Testis (tissue), 5 donors: ENCODE measurements at regions of chr10 and their contacts with region 1.

Region 1: GRCh38 chr10:105950410-105950809 is 1214.1 kb downstream of the SORCS1 start:
- DNase-seq: peak; percentile 72
- H3K4me3 ChIP-seq: no peak overlapping the region
- H3K27ac ChIP-seq: no peak overlapping the region
- H3K4me1 ChIP-seq: no peaks in the 10 kb centered on the region
- H3K27me3 ChIP-seq: no peaks in the 10 kb centered on the region
- CTCF ChIP-seq: peak; percentile 45 to 69 (median 60)
- POLR2A ChIP-seq: no peak

Region 2: GRCh38 chr10:106175760-106176377 is 225.5 kb after region 1 on chr10:
- intact Hi-C with region 1: loop called (anchors 5 kb)
- DNase-seq: no peak
- H3K4me3 ChIP-seq: no peak overlapping the region
- H3K27ac ChIP-seq: no peak overlapping the region
- H3K4me1 ChIP-seq: no peaks in the 10 kb centered on the region
- H3K27me3 ChIP-seq: no peaks in the 10 kb centered on the region
- CTCF ChIP-seq: peak in 1 of 3 experiments; percentile 11
- POLR2A ChIP-seq: no peak

Region 3: DNA sequence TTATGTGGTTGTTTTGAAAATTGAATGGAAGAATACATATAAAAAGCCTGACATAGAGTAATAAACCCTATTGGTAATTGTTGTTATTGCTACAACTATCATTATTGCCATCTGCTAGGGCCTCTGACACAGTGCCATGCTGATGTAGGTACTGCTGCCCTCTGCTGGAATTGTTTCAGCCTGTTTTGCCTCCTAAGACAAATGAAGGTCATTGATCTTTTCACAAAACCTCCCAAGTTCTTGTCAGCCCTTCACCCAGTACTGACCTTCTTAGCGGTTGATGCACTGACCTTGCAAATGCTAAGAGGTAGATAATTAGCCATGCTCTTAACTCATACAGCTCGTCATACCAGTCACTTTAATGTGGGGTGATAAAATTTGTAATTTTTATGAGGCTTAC is 238.9 kb after region 1 on chr10:
- intact Hi-C with region 1: no loop called
- DNase-seq: peak; percentile 59
- H3K4me3 ChIP-seq: no peak overlapping the region
- H3K27ac ChIP-seq: no peak overlapping the region
- H3K4me1 ChIP-seq: no peaks in the 10 kb centered on the region
- H3K27me3 ChIP-seq: no peaks in the 10 kb centered on the region
- CTCF ChIP-seq: peak in 1 of 3 experiments; percentile 13
- POLR2A ChIP-seq: no peak